ENCODE measurements at regions of chr14 and their contacts with region 1.

Region 1: DNA sequence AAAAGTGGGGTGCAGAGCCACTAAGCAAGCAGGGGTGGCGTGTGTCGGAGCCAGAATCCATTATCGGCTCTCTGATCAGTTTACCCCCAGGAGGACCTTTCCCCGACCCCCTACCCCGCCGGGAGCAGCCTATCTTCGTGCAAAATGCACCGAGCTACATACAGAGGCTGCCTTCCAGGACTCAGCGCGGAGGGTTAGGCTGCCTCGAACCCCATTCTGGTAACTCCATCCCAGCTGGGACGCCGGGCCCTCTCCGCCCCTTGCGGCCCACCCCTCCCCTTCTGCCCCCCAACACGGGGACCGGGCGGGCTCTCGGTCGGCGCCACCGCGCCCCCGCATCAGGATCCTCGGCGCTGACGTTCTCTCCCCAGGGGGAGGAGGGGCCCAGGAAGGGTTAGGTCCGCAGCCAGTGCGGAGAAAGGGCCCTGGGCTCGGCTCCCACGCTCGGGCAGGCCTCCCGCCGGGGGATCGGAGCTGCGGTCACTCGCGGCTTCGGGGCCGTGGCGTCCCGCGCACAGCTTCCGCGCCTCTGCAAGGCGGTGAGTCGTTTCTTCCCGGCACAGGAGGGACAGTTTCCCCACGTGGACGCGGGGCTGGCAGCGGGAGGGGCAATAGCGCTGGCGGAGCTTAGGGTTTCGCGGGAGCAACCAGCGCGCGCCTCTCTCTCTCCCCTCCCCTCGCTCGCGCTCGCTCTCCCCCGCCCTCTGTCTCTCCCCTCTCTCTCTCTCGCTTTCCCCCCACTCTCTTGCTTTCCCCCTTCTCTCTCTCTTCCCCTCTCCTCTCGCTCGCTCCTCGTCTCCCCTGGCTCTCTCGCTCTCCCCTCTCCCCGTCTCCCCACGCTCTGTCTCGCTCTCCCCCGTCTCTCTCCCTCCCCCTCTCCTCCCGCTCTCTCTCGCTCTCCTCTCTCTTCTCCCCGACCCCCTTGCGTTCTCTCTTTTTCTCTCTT is 12.5 kb upstream of the MAP3K9 start:
- DNase-seq: peak in 1 of 2 experiments; percentile 33
- H3K4me3 ChIP-seq: peak overlapping the region; percentile 74
- H3K27ac ChIP-seq: no peak overlapping the region
- H3K4me1 ChIP-seq: 0 out of 2 replicates have a peak, but pooled peaks cover 5% of the 10 kb centered on the region
- H3K27me3 ChIP-seq: peaks cover 30% of the 10 kb centered on the region; the same call in 1 of the 2 replicates
- CTCF ChIP-seq: no peak

Region 2: GRCh38 chr14:70640938-70641547 is 180.8 kb before region 1 on chr14:
- CTCF ChIA-PET with region 1: interaction called, 13 read pairs
- POLR2A ChIA-PET with region 1: interaction called, 6 read pairs
- intact Hi-C with region 1: no loop called
- DNase-seq: peak; percentile 47 to 77
- H3K4me3 ChIP-seq: peak overlapping the region; percentile 97
- H3K27ac ChIP-seq: 0 out of 2 replicates have a peak overlapping the region, but pooled peaks have one; percentile 1
- H3K4me1 ChIP-seq: peaks cover 32% of the 10 kb centered on the region
- H3K27me3 ChIP-seq: no peaks in the 10 kb centered on the region
- CTCF ChIP-seq: no peak

Region 3: DNA sequence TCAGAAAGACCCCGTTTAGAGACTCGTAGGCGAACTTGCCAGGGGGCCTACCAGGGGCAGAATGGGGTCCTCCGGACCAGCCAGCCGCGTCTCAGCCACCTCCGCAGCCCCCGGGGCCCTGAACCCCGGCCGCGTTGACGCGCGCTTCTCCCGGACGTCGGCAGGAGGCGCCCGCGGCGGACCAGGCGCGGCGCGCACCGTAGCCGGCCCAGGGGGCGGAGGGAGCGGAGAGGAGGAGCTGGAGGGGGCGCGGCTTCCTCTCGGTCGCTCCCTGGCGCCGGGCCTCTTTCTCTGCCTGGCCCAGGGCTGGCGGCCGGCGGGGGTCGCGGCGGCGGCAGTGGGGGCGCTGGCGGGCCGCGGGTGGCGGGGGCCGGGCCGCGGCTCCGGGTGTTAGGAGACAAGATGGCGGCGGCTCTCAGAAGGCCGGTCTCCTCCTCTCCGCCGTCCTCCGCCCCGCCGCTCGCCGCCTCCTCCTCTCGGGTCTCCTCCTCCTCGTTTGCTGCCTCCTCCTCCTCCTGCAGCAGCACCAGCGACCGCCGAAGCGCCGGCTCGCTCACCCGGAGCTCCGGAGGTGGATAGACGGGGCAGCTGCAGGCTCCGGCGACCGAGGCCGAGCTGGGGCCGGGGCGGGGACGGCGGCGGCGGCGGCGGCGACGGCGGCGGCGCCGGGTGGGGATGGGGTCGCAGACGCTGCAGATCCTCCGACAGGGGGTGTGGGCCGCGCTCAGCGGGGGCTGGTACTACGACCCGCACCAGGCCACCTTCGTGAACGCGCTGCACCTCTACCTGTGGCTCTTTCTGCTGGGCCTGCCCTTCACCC is 85.5 kb after region 1 on chr14 and contains the start of gene PCNX1:
- CTCF ChIA-PET with region 1: interaction called, 14 read pairs
- POLR2A ChIA-PET with region 1: no interaction called
- intact Hi-C with region 1: loop called (anchors 2 kb)
- DNase-seq: peak; percentile 73 to 91
- H3K4me3 ChIP-seq: peak within 1 kb of the TSS; percentile 68
- H3K27ac ChIP-seq: peak within 1 kb of the TSS; percentile 68
- H3K4me1 ChIP-seq: peaks cover 15% of the 10 kb centered on the region
- H3K27me3 ChIP-seq: no peaks in the 10 kb centered on the region
- CTCF ChIP-seq: peak; percentile 77
- total RNA-seq, gene PCNX1: 37.6 and 67.8 TPM in 2 replicates

Region 4: DNA sequence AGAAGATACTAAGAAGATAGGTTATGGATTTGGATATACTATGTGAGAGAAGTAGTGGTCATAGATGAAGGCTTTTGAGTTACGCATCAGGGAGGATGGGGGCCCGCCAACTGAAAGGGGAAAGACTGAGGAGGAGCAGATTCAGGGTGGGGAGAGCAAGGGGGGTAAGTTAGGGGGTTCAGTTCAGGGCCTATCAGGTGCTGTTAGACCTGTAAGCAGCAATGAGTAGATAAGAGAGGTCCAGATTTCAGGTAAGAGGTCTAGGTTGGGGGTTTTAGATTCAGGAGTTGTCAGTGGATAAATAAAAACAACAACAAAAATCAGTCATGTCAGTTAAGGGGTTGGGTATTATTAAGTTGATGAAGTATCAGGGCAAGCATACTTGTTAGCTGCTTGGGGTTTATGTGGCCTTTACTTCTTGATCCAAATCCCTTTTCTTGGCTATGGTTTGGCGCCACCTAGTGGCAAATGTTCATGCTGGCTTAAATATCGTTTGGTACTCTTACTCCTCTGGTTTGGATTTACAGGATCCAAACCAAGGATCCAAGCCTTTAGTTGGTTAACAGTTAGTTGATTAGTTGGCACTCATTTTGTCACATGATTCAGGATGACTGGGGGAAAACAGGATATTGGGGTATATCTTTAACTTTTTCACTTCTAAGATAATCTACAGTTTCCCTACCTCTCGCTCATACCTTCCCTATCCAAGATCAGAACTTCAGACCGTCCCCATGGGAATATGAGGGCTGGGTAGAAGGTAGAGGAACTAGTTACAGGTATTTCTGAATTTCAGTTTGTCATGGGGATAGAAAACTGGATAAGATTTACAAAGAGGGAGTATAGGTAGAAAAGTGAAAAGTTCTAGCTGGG is 150.5 kb after region 1 on chr14:
- CTCF ChIA-PET with region 1: interaction called, 6 read pairs
- POLR2A ChIA-PET with region 1: no interaction called
- intact Hi-C with region 1: loop called (anchors 1 kb)
- DNase-seq: peak; percentile 61 to 71
- H3K4me3 ChIP-seq: no peak overlapping the region
- H3K27ac ChIP-seq: no peak overlapping the region
- H3K4me1 ChIP-seq: no peaks in the 10 kb centered on the region
- H3K27me3 ChIP-seq: no peaks in the 10 kb centered on the region
- CTCF ChIP-seq: peak; percentile 97